Gastrocnemius medialis (tissue), 4 donors: ENCODE measurements at regions of chr12 and their contacts with region 1.

Region 1: GRCh38 chr12:32455607-32456071 is 56.3 kb downstream of the FGD4 start:
- DNase-seq: no peak
- ATAC-seq: peak; percentile 75 to 77
- H3K4me3 ChIP-seq: peak overlapping the region; percentile 36 to 55 (median 42)
- H3K27ac ChIP-seq: peak overlapping the region; percentile 45 to 72 (median 62)
- H3K4me1 ChIP-seq: peaks cover 25 to 45% of the 10 kb centered on the region in 2 donors
- H3K27me3 ChIP-seq: no peaks in the 10 kb centered on the region
- CTCF ChIP-seq: peak; percentile 51 to 89 (median 69)
- POLR2A ChIP-seq: no peak

Region 2: DNA sequence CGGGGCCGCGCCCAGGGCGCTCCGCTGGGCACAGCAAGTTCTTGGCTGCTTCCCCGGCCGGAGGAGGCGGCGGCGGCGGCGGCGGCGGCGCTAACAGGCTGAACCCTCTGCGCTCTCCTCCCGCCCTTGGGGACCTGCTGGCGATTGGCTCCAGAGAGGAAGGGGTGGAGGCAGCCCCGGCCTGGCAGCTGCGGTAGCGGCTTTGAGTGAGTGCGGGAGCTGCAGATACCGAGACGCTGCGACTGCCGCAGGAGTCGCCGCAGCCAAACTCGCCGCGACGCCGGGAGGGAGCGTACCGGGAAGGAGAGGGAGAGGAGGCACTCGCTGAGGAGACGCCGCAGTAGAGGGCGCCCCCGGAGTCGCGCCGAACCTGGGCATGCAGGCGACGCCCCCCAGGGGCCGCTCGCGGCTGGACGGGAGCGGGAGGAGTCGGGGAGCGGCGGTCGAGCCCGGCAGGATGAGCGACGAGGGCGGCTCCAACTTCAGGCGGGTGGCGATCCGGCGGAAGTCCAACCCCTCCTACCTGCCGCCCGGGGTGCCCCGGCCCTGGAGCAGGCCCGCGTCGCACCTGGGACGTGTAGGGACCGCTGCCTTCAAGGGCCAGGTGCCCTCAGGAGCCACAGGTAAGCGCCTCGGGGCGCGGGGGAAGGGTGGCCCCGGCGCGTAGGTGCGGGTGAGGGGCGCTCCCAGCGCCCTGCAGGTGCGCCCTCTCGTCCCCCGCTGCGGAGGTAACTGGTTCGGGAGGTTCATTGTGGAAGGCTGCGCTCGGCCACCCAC is 56.1 kb before region 1 on chr12 and contains the start of gene FGD4:
- in situ Hi-C with region 1: no loop called
- intact Hi-C with region 1: loop called (anchors 5 kb)
- DNase-seq: peak; percentile 87 to 91
- ATAC-seq: peak; percentile 93 to 94
- H3K4me3 ChIP-seq: peak within 1 kb of the TSS; percentile 65 to 95 (median 82)
- H3K27ac ChIP-seq: peak within 1 kb of the TSS; percentile 63 to 86 (median 86)
- H3K4me1 ChIP-seq: peaks cover 4 to 16% of the 10 kb centered on the region in 2 donors
- H3K27me3 ChIP-seq: no peaks in the 10 kb centered on the region
- CTCF ChIP-seq: peak in 4 of 5 experiments; percentile 19 to 54 (median 46)
- POLR2A ChIP-seq: peak; percentile 76 to 83
- total RNA-seq, gene FGD4: 18.8 to 60.3 (median 40.8) TPM

Region 3: DNA sequence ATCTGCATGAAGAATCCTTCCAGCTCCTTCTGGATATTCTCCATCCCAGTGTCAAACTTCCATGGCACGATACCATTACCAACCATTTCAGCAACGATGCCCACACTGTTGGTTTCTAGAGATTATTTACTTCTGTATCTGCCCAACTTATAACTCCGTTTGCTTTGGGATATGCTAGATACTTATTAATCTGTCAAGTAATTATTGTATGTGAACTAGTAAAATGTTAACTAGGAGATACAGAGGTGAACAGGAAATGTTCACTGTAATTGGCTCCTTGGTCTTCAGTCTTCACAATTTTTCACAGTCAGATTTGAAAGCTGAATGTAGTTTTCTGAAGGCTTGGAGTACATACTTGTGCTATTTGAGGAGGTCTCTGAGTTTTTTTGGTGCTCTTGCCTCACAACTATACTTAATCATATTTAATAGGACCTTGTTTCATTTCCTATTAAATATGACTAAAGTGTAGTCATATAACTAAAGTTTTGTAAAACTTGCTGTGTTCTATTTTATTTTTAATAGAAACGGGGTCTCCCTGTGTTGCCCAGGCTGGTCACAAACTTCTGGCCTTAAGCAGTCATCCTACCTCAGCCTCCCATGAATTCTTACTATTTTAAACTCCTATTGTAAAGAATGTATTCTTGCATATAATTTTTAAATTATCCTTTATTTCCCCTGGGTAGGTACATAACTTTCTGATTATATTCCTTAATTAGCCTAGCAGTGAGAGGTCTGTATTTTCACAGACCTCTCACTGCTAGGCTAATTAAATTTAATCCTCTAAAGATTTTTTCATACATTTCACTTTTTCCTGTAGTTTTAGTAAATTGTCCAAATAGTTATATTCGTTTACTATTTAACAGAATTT is 23.5 kb after region 1 on chr12:
- in situ Hi-C with region 1: no loop called
- intact Hi-C with region 1: no loop called
- DNase-seq: no peak
- ATAC-seq: no peak
- H3K4me3 ChIP-seq: no peak overlapping the region
- H3K27ac ChIP-seq: peak overlapping the region in 2 of 4 donors; percentile 21 to 28
- H3K4me1 ChIP-seq: peaks cover 27 to 44% of the 10 kb centered on the region in 2 donors
- H3K27me3 ChIP-seq: no peaks in the 10 kb centered on the region
- CTCF ChIP-seq: no peak
- POLR2A ChIP-seq: no peak

Region 4: DNA sequence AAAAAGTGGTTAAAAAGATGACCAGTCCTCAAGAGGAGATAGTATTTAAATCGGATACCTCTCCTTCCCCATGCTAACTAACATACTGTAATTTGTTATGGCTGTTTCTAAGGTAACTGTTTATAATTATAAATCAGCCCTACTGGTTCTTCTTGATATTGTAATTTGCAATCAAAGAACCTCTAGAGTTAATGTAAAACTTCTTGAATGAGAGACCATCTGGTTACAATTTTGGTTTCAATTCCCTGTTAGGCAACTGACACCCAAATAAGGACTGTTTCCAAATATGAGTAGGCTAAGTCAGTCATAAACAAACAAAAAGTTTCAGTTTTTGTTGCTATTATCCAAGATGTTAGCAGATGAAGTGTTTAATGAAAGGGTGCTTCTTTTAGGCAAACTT is 103.3 kb after region 1 on chr12:
- in situ Hi-C with region 1: loop called in 1 of 4 experiments (anchors 25 kb)
- intact Hi-C with region 1: loop called (anchors 5 kb)
- DNase-seq: no peak
- ATAC-seq: peak; percentile 44 to 53
- H3K4me3 ChIP-seq: peak overlapping the region; percentile 15 to 40 (median 26)
- H3K27ac ChIP-seq: peak overlapping the region; percentile 64 to 81 (median 74)
- H3K4me1 ChIP-seq: peaks cover 39 to 50% of the 10 kb centered on the region in 2 donors
- H3K27me3 ChIP-seq: no peaks in the 10 kb centered on the region
- CTCF ChIP-seq: peak in 1 of 5 experiments; percentile 20
- POLR2A ChIP-seq: no peak

Region 5: DNA sequence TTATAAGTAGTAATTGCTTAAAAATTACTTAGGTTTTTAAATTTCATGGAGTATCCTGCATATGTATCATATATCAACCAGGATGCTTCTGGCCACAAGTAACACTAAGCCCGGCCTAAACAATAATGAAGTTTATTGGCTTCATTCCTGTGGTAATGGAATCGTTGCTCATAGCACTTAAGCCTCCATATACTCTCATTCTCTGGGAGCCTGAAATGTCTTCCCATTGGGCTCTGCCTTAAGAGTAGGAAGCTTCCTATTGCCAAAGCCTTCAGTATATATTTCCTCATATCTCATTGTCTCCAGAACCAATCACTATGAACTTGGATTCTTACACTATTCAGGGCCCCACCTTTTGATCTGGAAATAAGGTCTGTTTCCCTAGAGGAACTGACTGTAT is 139.6 kb after region 1 on chr12:
- in situ Hi-C with region 1: no loop called
- intact Hi-C with region 1: no loop called
- DNase-seq: no peak
- ATAC-seq: no peak
- H3K4me3 ChIP-seq: no peak overlapping the region
- H3K27ac ChIP-seq: no peak overlapping the region
- H3K4me1 ChIP-seq: peaks cover 0 to 4% of the 10 kb centered on the region in 2 donors
- H3K27me3 ChIP-seq: no peaks in the 10 kb centered on the region
- CTCF ChIP-seq: no peak
- POLR2A ChIP-seq: no peak

Region 6: GRCh38 chr12:32671930-32672780 is 216.5 kb after region 1 on chr12:
- in situ Hi-C with region 1: loop called in 3 of 4 experiments (anchors 5 kb)
- intact Hi-C with region 1: loop called (anchors 1 kb)
- DNase-seq: peak in 1 of 2 donors; percentile 27
- ATAC-seq: peak; percentile 95 to 97
- H3K4me3 ChIP-seq: no peak overlapping the region
- H3K27ac ChIP-seq: no peak overlapping the region
- H3K4me1 ChIP-seq: peaks cover 0 to 4% of the 10 kb centered on the region in 2 donors
- H3K27me3 ChIP-seq: no peaks in the 10 kb centered on the region
- CTCF ChIP-seq: peak; percentile 36 to 64 (median 55)
- POLR2A ChIP-seq: no peak